IMR-90 (cell line): ENCODE measurements at regions of chr15 and their contacts with region 1.

Region 1: GRCh38 chr15:65318870-65319356 is 14.4 kb downstream of the RNU5B-1 start:
- DNase-seq: peak; percentile 70
- ATAC-seq: peak; percentile 100
- H3K4me3 ChIP-seq: no peak overlapping the region
- H3K27ac ChIP-seq: no peak overlapping the region
- H3K4me1 ChIP-seq: no peaks in the 10 kb centered on the region
- H3K27me3 ChIP-seq: peaks cover 20% of the 10 kb centered on the region
- CTCF ChIP-seq: peak; percentile 98
- POLR2A ChIP-seq: peak; percentile 32; the same call in 1 of the 2 replicates
- RAD21 ChIP-seq: peak; percentile 99

Region 2: DNA sequence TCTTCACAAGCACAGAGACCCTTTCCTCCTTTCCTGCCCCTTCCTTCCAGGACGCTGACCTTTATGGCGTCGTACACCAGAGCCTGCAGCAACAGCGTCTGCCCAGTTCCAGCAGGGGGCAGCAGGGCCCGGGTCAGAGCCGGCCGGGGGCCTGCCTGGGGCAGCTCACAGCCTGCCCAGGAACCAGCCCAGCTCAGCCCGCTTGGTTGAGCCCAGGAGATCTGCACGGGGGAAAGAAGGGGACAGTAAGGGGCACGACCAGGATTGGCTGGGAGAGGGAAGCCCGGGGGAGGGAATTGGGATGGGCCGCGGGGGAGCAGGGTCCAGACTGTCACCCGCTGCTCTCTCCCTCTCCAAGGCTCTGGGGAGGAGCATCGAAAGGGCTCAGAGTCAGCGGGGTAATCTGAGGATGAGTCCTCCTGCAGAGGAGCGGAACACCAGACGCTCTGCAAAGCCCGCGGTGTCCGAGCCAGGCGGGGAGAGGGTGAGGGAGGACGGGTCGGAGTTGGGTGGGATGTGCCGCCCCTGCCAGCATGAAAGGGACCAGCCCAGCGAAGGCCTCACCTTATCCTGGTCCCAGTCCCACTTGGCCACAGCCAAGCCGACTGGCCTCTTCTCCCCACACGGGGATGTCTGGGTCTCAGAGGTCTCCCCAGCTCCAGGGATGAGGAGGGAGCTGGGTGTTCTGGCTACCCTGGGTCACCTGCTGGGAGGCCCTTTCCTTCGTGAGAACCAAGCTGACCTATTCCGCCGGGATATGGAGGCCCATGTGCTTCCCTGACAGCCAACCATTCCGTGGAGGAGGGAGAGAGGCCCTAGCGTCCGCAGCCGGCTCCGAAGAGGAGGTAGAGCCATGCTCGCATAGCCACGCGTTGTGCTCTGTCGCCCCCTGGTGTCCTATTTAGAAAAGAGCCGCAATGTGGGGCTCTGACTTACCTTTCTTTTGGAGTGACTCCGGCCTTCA is 66.3 kb after region 1 on chr15:
- CTCF ChIA-PET with region 1: interaction called, 20 read pairs
- POLR2A ChIA-PET with region 1: no interaction called
- dilution Hi-C with region 1: no loop called
- in situ Hi-C with region 1: loop called (anchors 5 kb)
- intact Hi-C with region 1: loop called (anchors 1 kb)
- DNase-seq: peak; percentile 69
- ATAC-seq: peak; percentile 97
- H3K4me3 ChIP-seq: no peak overlapping the region
- H3K27ac ChIP-seq: no peak overlapping the region
- H3K4me1 ChIP-seq: peaks cover 2% of the 10 kb centered on the region; the same call in 1 of the 2 replicates
- H3K27me3 ChIP-seq: peaks cover 20% of the 10 kb centered on the region
- CTCF ChIP-seq: peak; percentile 93
- POLR2A ChIP-seq: no peak
- RAD21 ChIP-seq: peak; percentile 88

Region 3: DNA sequence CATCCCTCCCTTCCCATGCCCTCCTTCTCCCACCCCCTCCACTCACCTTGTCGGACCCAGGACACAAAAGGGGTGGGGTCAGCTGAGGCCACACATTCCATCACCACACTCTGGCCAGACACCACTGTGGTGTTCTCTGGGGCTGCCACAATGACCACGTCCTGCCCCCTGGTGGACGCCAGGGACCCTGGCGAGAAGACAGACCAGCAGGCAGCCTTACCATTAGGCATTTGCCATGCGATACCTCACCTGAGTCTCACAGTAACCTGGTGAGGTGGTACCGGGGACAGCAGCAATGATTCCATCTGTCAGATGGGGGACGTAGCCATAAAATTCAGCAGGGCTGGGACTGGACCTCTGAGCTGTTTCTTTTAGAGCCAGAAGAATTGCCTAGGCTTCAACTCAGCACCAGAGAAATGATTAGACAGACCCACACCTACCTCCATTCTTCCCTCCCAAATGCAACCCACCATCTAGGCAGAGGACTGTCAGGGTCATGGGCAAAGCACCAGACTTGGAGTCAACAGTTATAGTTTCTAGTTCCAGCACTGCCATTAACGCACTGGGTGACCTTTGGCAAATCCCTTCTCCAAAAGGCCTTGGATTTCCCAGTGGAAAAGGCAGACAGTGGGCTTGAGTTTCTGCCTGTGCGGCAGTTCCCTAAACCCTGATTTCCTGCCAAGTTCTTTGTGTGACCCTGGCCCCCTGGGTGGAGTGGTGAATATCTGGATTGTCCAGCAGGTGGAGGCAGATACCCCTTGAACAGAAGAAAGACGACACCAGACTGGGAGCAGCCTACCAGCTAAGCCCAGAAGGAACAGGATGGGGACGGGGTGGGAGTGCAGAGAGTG is 82.1 kb after region 1 on chr15:
- CTCF ChIA-PET with region 1: interaction called, 5 read pairs
- POLR2A ChIA-PET with region 1: no interaction called
- dilution Hi-C with region 1: no loop called
- in situ Hi-C with region 1: no loop called
- intact Hi-C with region 1: loop called (anchors 1 kb)
- DNase-seq: peak; percentile 72
- ATAC-seq: peak; percentile 93
- H3K4me3 ChIP-seq: no peak overlapping the region
- H3K27ac ChIP-seq: no peak overlapping the region
- H3K4me1 ChIP-seq: no peaks in the 10 kb centered on the region
- H3K27me3 ChIP-seq: peaks cover 16% of the 10 kb centered on the region; the same call in 1 of the 2 replicates
- CTCF ChIP-seq: peak; percentile 72
- POLR2A ChIP-seq: no peak
- RAD21 ChIP-seq: peak; percentile 80